CD8-positive, alpha-beta T cell (primary cell): ENCODE measurements at regions of chr5 and their contacts with region 1.

Region 1: DNA sequence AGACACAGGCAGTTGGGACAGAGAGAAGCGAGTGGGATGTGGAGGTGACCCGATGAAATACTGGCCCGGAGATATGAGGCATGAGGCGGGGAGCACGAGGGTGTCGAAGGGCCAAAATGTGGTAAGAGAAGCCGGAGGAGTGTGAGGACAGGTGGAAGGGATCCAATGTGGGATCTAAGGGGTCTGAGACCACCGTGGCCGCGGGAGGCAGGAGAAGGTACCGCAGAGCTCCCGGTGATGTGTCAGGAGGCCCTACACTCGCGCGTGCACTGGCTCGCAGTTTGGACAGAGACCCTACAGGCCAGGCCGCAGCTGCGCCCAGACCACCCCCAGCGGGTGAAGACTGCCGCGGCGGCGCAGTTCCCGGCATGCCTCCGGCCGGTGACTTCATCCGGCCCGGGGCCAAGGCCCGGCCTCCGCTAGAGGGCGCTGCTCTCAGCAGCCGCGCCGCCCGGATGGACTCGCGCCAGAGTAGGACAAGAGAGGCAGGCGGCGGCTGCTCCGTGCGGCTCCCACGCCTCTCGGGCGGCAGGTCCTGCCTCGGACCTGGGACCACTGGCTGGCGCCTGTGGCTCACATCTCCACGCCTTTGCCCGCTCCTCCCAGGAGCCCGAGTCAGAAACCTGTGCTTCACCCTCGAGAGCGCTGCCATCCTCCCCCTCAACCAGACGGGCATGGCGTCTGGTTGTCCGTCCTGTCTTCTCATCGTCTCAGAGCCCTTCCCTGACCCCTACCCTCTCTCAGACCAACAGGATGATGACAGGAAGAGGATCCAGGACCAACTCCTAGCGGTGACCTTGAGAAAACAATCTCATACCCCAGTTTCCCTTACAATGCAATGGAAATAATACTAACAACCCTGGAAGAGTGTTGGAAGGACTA is 35.4 kb upstream of the STING1 start:
- DNase-seq: peak; percentile 82 to 97 (median 90)
- ATAC-seq: peak; percentile 92
- H3K4me3 ChIP-seq: peak overlapping the region; percentile 58 to 63
- H3K4me3 Mint-ChIP-seq: peak overlapping the region; percentile 88
- H3K27ac ChIP-seq: peak overlapping the region; percentile 60 to 79
- H3K27ac Mint-ChIP-seq: peak overlapping the region; percentile 96
- H3K4me1 ChIP-seq: peaks cover 11% of the 10 kb centered on the region
- H3K4me1 Mint-ChIP-seq: peaks cover 23% of the 10 kb centered on the region
- H3K27me3 ChIP-seq: no peaks in the 10 kb centered on the region
- H3K27me3 Mint-ChIP-seq: no peaks in the 10 kb centered on the region
- CTCF ChIP-seq: peak; percentile 96

Region 2: GRCh38 chr5:139415221-139415861 is 102.6 kb before region 1 on chr5:
- CTCF ChIA-PET with region 1: interaction called, 473 read pairs
- POLR2A ChIA-PET with region 1: no interaction called
- intact Hi-C with region 1: no loop called
- DNase-seq: no peak
- ATAC-seq: no peak
- H3K4me3 ChIP-seq: no peak overlapping the region
- H3K4me3 Mint-ChIP-seq: no peak overlapping the region
- H3K27ac ChIP-seq: no peak overlapping the region
- H3K27ac Mint-ChIP-seq: no peak overlapping the region
- H3K4me1 ChIP-seq: no peaks in the 10 kb centered on the region
- H3K4me1 Mint-ChIP-seq: peaks cover 5% of the 10 kb centered on the region
- H3K27me3 ChIP-seq: no peaks in the 10 kb centered on the region
- H3K27me3 Mint-ChIP-seq: no peaks in the 10 kb centered on the region
- CTCF ChIP-seq: no peak

Region 3: DNA sequence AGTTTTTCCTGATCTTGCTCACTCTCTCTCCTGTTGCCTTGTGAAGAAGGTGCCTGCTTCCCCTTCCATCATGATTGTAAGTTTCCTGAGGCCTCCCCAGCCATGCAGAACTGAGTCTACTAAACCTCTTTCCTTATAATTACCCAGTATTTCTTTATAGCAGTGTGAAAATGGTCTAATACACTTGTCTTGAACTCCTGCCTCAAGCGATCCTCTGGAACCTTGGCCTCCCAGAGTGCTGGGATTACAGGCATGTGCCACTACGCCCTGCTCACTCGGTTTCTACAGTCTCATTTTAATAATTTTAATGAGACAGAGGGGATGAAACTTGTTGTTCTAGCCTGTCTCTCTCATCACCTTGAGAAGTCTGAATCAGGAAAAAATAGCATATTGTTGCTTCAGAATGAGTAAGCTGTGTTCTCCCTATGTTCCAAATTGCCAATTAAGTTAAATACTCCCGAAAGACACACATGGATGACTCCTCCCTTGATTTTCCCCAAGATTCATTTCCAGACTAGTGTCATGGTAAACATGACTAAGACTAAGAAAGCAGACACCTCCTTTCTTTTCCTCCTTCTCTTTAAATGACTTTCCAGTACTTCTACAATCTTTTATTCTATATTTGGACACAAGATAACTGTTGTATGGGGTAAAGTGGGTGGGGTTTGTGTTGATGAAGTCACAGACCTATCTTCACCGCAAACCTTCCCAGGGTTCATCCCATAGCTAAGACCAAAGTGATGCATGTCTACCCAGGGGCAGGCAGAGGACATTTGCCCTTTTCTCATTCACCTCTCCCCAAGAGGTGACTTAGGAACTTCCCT is 70.8 kb before region 1 on chr5:
- CTCF ChIA-PET with region 1: interaction called, 20 read pairs
- POLR2A ChIA-PET with region 1: no interaction called
- intact Hi-C with region 1: no loop called
- DNase-seq: peak in 1 of 9 experiments; percentile 18
- ATAC-seq: no peak
- H3K4me3 ChIP-seq: no peak overlapping the region
- H3K4me3 Mint-ChIP-seq: no peak overlapping the region
- H3K27ac ChIP-seq: no peak overlapping the region
- H3K27ac Mint-ChIP-seq: no peak overlapping the region
- H3K4me1 ChIP-seq: peaks cover 26% of the 10 kb centered on the region
- H3K4me1 Mint-ChIP-seq: peaks cover 21% of the 10 kb centered on the region
- H3K27me3 ChIP-seq: no peaks in the 10 kb centered on the region
- H3K27me3 Mint-ChIP-seq: no peaks in the 10 kb centered on the region
- CTCF ChIP-seq: no peak

Region 4: DNA sequence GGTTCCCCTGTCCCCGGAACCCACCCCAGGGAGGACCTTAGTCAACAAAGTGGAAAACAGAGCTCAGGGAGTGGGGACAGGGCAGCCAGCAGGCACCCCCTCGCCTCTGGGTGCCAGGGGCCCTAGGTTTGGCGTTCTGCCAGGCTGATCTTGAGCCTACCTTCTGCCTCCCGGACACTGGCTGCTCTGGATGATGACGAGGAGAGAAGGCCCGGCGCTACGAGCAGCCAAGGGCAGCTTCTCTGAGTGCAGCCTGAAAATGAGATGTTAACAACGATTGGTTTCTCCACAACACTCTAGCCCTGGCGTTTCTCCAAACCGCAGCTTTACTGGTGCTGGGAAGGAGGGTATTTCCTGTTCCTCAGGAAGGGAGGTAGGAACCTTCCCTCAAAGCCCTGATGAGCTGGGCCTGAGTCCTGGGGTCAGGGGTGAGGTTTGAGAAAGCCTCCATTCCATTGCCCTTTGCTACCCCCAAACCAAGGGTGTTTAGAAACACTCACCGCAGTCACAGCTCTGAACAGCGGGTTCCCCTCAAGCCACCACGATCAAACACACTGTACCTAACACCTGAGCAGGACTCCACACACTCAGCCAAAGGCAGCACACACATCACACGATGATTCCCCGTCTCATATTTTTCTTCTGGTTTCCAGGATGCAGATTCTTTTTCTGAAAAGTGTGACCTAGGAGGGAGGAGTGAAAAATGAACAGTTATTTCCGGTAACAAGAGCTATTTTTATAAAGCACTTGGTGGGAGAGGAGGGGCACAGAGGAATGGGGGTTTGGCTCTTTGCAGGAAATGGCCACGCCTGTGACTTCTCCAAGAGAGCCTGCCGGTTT is 35.7 kb before region 1 on chr5 and contains the start of gene STING1:
- CTCF ChIA-PET with region 1: interaction called, 21 read pairs
- POLR2A ChIA-PET with region 1: interaction called, 3 read pairs
- intact Hi-C with region 1: loop called (anchors 2 kb)
- DNase-seq: peak; percentile 22 to 89 (median 73)
- ATAC-seq: peak; percentile 78
- H3K4me3 ChIP-seq: peak within 1 kb of the TSS; percentile 56 to 61
- H3K4me3 Mint-ChIP-seq: peak within 1 kb of the TSS; percentile 90
- H3K27ac ChIP-seq: peak within 1 kb of the TSS; percentile 58 to 84
- H3K27ac Mint-ChIP-seq: peak within 1 kb of the TSS; percentile 97
- H3K4me1 ChIP-seq: peaks cover 26% of the 10 kb centered on the region
- H3K4me1 Mint-ChIP-seq: peaks cover 34% of the 10 kb centered on the region
- H3K27me3 ChIP-seq: no peaks in the 10 kb centered on the region
- H3K27me3 Mint-ChIP-seq: no peaks in the 10 kb centered on the region
- CTCF ChIP-seq: no peak
- total RNA-seq, gene STING1: 55.0 to 57.8 TPM

Region 5: GRCh38 chr5:139574641-139575312 is 56.9 kb after region 1 on chr5:
- CTCF ChIA-PET with region 1: interaction called, 5 read pairs
- POLR2A ChIA-PET with region 1: interaction called, 7 read pairs
- intact Hi-C with region 1: loop called in 1 of 2 experiments (anchors 1 kb)
- DNase-seq: peak in 5 of 9 experiments; percentile 16 to 76 (median 45)
- ATAC-seq: peak; percentile 42
- H3K4me3 ChIP-seq: no peak overlapping the region
- H3K4me3 Mint-ChIP-seq: peak overlapping the region; percentile 20
- H3K27ac ChIP-seq: peak overlapping the region in 1 of 2 experiments; percentile 34
- H3K27ac Mint-ChIP-seq: peak overlapping the region; percentile 43
- H3K4me1 ChIP-seq: peaks cover 75% of the 10 kb centered on the region
- H3K4me1 Mint-ChIP-seq: peaks cover 79% of the 10 kb centered on the region
- H3K27me3 ChIP-seq: no peaks in the 10 kb centered on the region
- H3K27me3 Mint-ChIP-seq: no peaks in the 10 kb centered on the region
- CTCF ChIP-seq: peak; percentile 72

Region 6: GRCh38 chr5:139765409-139766217 is 247.7 kb after region 1 on chr5:
- CTCF ChIA-PET with region 1: interaction called, 6 read pairs
- POLR2A ChIA-PET with region 1: no interaction called
- intact Hi-C with region 1: loop called (anchors 1 to 5 kb)
- DNase-seq: peak; percentile 74 to 93 (median 83)
- ATAC-seq: peak; percentile 92
- H3K4me3 ChIP-seq: peak overlapping the region; percentile 60 to 67
- H3K4me3 Mint-ChIP-seq: peak overlapping the region; percentile 67
- H3K27ac ChIP-seq: no peak overlapping the region
- H3K27ac Mint-ChIP-seq: no peak overlapping the region
- H3K4me1 ChIP-seq: peaks cover 20% of the 10 kb centered on the region
- H3K4me1 Mint-ChIP-seq: peaks cover 16% of the 10 kb centered on the region
- H3K27me3 ChIP-seq: peaks cover 5 to 9% of the 10 kb centered on the region in 2 experiments
- H3K27me3 Mint-ChIP-seq: peaks cover 24% of the 10 kb centered on the region
- CTCF ChIP-seq: peak; percentile 100

Region 7: DNA sequence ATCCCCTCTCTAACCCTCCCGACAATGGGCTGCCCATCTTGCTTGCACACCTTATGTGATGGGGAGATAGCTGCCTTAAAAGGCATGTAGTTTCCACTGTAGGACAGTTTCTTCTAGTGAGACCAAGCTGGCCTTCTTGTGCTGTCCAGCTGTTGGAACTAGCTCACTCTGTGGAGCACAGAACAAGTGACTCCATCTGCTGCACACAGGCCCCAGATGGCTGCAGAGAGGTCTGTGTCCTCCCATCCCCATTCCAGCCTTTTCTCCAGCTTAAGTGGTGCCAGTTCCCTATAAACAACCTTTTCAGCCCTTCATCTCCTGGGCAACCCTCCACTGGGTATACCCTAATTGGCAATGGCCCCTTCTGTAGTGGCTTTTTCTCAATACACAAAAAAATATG is 258.9 kb after region 1 on chr5:
- CTCF ChIA-PET with region 1: no interaction called
- POLR2A ChIA-PET with region 1: no interaction called
- intact Hi-C with region 1: no loop called
- DNase-seq: no peak
- ATAC-seq: no peak
- H3K4me3 ChIP-seq: no peak overlapping the region
- H3K4me3 Mint-ChIP-seq: no peak overlapping the region
- H3K27ac ChIP-seq: no peak overlapping the region
- H3K27ac Mint-ChIP-seq: no peak overlapping the region
- H3K4me1 ChIP-seq: no peaks in the 10 kb centered on the region
- H3K4me1 Mint-ChIP-seq: peaks cover 7% of the 10 kb centered on the region
- H3K27me3 ChIP-seq: no peaks in the 10 kb centered on the region
- H3K27me3 Mint-ChIP-seq: peaks cover 2% of the 10 kb centered on the region
- CTCF ChIP-seq: no peak